ENCODE measurements at regions of chr17 and their contacts with region 1.

Region 1: GRCh38 chr17:37373530-37374159 is 2.1 kb upstream of the C17orf78 start:
- DNase-seq: no peak
- H3K4me3 ChIP-seq: no peak overlapping the region
- H3K27ac ChIP-seq: no peak overlapping the region
- H3K4me1 ChIP-seq: peaks cover 0 to 5% (median 4%) of the 10 kb centered on the region in 4 donors
- H3K27me3 ChIP-seq: no peaks in the 10 kb centered on the region
- CTCF ChIP-seq: peak; percentile 90 to 98 (median 95)
- EP300 ChIP-seq: no peak
- POLR2A ChIP-seq: no peak

Region 2: GRCh38 chr17:37392024-37392590 is 18.5 kb after region 1 on chr17:
- intact Hi-C with region 1: loop called (anchors 2 kb)
- DNase-seq: no peak
- H3K4me3 ChIP-seq: no peak overlapping the region
- H3K27ac ChIP-seq: no peak overlapping the region
- H3K4me1 ChIP-seq: peaks cover 0 to 8% (median 0%) of the 10 kb centered on the region in 4 donors
- H3K27me3 ChIP-seq: no peaks in the 10 kb centered on the region
- CTCF ChIP-seq: no peak
- EP300 ChIP-seq: no peak
- POLR2A ChIP-seq: no peak

Measured in esophagus muscularis mucosa (tissue), 4 donors.